Left cardiac atrium (tissue), 4 donors: ENCODE measurements at regions of chr1 and their contacts with region 1.

Region 1: GRCh38 chr1:230797942-230798418 is 50.8 kb downstream of the CAPN9 start:
- DNase-seq: peak; percentile 71
- ATAC-seq: peak; percentile 92 to 93

Region 2: GRCh38 chr1:230215031-230215430 is 582.9 kb before region 1 on chr1:
- intact Hi-C with region 1: no loop called
- DNase-seq: peak; percentile 71
- ATAC-seq: peak; percentile 85 to 93

Region 3: GRCh38 chr1:230867903-230868735 is 70.1 kb after region 1 on chr1 and contains the start of gene C1orf198:
- intact Hi-C with region 1: loop called (anchors 5 to 10 kb)
- DNase-seq: peak; percentile 77
- ATAC-seq: peak; percentile 94
- total RNA-seq, gene C1orf198: 51.8 to 54.8 TPM

Region 4: GRCh38 chr1:230917284-230918135 is 119.5 kb after region 1 on chr1:
- intact Hi-C with region 1: loop called (anchors 1 to 2 kb)
- DNase-seq: peak; percentile 78
- ATAC-seq: peak; percentile 84 to 87

Region 5: GRCh38 chr1:231211005-231211857 is 413.3 kb after region 1 on chr1:
- intact Hi-C with region 1: loop called in 1 of 2 experiments (anchors 2 kb)
- DNase-seq: peak; percentile 75
- ATAC-seq: peak; percentile 82 to 86